ENCODE measurements at regions of chr12 and their contacts with region 1.

Region 1: GRCh38 chr12:2944401-2945047 is 14.7 kb upstream of the TEAD4 start:
- DNase-seq: no peak
- H3K4me3 ChIP-seq: no peak overlapping the region
- CTCF ChIP-seq: peak; percentile 67

Region 2: GRCh38 chr12:2884810-2885209 is 59.7 kb before region 1 on chr12:
- CTCF ChIA-PET with region 1: interaction called, 18 read pairs
- POLR2A ChIA-PET with region 1: no interaction called
- DNase-seq: no peak
- H3K4me3 ChIP-seq: no peak overlapping the region
- CTCF ChIP-seq: no peak

Region 3: DNA sequence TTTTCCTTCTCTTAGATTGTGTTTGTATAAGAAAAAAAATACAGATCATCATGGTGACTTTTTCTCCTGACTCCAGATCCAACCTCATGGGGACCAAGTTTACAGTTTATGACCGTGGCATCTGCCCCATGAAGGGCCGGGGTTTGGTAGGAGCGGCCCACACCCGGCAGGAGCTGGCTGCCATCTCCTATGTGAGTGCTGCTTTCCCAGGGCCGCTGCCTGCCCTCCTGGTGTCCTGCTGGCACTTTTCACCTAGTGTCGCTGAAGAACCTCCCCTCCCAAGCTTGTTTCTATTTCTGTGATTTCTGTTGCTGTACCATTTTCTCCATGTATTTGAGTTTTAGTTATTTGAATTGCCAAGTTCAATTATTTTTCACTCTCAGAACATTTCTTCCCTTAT is 10.2 kb before region 1 on chr12:
- CTCF ChIA-PET with region 1: interaction called, 11 read pairs
- POLR2A ChIA-PET with region 1: interaction called, 4 read pairs
- DNase-seq: no peak
- H3K4me3 ChIP-seq: no peak overlapping the region
- CTCF ChIP-seq: no peak